Activated naive CD4-positive, alpha-beta T cell treated with anti-CD3 and anti-CD28 coated beads for 36 hours (primary cell): ENCODE measurements at regions of chr9 and their contacts with region 1.

Region 1: DNA sequence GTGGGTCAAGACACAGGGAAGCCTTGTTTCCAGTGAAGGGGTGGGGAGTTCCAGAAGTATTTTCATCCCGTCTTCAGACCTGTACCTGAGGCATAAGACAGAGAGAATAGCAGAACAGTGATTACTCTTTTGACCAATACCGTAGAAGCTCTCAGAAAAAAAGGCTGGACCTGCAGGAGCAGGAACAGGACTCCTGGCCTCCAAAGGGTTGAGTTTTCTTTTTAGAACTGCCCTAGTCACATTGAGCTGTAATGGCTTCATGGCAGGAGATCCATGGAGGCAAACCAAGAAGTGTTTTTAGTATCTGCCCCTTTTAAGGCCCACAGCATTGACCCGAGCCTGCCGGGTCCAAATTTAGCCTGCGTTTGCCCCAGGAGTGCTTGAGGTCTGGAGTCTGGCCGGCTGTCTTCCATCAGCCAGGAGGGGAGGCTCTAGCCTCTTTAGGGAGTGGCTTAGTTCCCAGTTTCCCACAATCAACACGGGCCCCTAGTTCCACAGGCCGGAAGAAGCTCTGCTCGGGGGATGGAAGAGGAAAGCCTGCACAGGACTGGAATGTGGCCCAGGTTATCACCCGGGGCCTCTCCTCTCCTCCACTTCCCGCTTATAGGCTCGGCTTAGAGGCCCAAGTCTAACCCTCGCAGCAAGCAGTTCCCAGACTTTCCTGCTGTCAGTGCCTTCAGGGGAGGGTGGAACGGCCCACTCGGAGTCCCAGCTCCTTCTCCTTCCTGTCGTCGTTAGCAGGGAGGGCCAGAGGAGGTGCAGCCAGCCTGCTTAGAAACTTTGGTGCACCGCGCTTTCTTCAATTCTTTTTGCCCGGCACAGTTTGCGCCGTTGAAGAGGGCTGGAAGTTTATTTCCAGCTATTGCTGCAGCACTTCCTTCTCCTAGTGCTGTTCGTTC is 80.7 kb downstream of the C9orf152 start:
- DNase-seq: no peak
- H3K4me3 Mint-ChIP-seq: no peak overlapping the region
- H3K27ac Mint-ChIP-seq: no peak overlapping the region
- H3K4me1 Mint-ChIP-seq: peaks cover 17% of the 10 kb centered on the region
- H3K27me3 Mint-ChIP-seq: no peaks in the 10 kb centered on the region

Region 2: DNA sequence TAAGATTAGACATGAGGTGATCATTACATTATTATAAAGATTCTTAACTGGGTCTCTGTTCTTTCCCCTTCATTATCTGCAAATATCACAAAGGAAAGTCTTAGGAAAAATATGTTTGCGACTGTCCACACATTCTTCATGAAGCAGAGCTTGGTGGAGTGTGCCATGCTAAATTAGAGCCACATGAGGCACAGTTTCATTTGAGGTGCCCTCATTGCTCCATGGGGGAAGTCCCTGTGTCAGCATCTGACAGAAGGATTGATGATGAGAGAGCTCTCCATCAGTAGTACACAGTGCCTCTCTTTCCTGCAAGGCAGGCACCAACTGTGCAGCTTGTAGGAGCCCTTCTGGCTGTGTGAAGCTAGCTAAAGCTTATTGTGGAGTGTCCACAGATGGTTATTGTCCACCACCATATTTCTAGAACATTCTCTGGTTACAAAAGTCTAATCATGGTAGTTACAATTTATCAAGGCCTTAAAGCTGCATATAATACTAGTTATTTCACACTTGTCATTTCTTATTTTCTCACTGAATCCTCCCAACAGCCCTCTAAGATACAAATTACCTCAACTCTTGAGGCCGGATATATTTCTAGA is 16.8 kb after region 1 on chr9:
- CTCF ChIA-PET with region 1: interaction called, 3 read pairs
- intact Hi-C with region 1: loop called (anchors 2 kb)
- DNase-seq: peak; percentile 72
- H3K4me3 Mint-ChIP-seq: no peak overlapping the region
- H3K27ac Mint-ChIP-seq: peak overlapping the region; percentile 16
- H3K4me1 Mint-ChIP-seq: peaks cover 46% of the 10 kb centered on the region
- H3K27me3 Mint-ChIP-seq: no peaks in the 10 kb centered on the region

Region 3: DNA sequence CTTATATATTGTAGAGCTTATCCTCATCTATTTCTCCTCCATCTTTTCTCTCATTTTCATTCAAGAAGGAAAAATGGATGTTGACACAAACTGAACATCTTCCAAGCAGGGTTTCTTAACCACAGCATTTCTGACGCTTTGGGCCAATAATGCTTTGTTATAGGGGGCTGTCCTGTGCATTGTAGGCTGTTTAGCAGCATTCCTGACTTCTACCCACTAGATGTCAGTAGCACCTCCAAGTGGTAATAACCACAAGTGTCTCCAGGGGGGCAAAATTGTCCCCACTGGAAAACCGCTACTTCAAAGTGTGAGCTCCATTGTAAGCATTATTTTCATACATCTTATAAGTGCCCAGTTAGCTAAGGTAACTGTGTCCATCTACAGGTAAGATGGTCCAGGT is 213.1 kb after region 1 on chr9:
- CTCF ChIA-PET with region 1: no interaction called
- intact Hi-C with region 1: no loop called
- DNase-seq: no peak
- H3K4me3 Mint-ChIP-seq: no peak overlapping the region
- H3K27ac Mint-ChIP-seq: no peak overlapping the region
- H3K4me1 Mint-ChIP-seq: no peaks in the 10 kb centered on the region
- H3K27me3 Mint-ChIP-seq: peaks cover 2% of the 10 kb centered on the region